Gastrocnemius medialis (tissue), 4 donors: ENCODE measurements at regions of chr6 and their contacts with region 1.

Region 1: GRCh38 chr6:15715060-15715459 is 52.2 kb upstream of the DTNBP1 start:
- DNase-seq: peak; percentile 6 to 40
- ATAC-seq: peak; percentile 70 to 79
- H3K4me3 ChIP-seq: no peak overlapping the region
- H3K27ac ChIP-seq: peak overlapping the region; percentile 44 to 80 (median 64)
- H3K4me1 ChIP-seq: peaks cover 29 to 30% of the 10 kb centered on the region in 2 donors
- H3K27me3 ChIP-seq: no peaks in the 10 kb centered on the region
- CTCF ChIP-seq: no peak
- POLR2A ChIP-seq: no peak

Region 2: DNA sequence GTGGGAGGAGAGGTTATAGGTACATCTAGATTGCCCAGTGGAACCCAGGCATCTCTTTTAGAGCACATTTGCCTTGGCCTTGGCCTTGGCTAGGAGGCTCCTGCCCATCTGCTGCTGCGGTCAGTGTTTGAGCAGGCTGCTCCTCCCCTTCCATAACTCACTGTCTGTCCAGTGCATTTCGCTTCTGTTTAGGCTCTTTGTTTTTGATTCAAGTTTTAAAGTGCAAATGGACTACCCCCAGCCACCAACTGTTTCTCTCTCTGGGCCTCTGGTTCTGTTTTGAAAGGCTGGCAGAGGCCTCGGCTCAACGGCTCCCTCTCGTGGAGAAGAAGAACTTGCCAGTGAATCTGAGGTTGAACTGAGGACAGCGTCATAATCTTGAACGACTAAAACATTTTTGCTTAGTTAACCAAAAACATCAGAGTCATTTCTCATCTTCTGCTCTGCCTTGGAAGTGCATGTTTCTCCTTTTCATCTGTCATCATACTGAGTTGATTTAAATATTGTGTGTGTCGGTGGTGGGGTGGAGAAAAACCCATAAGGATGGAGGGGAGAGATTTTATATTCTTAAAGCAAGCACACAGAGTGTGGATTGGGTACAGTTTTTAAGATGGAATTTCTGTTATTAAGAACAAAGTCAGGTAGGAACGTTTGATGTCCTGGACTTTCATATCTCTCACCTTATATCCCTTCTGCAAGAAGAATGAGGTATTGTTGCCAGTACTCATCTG is 223.6 kb before region 1 on chr6:
- in situ Hi-C with region 1: no loop called
- intact Hi-C with region 1: no loop called
- DNase-seq: peak; percentile 59 to 77
- ATAC-seq: peak; percentile 42 to 56
- H3K4me3 ChIP-seq: no peak overlapping the region
- H3K27ac ChIP-seq: peak overlapping the region; percentile 55 to 73 (median 69)
- H3K4me1 ChIP-seq: peaks cover 38 to 45% of the 10 kb centered on the region in 2 donors
- H3K27me3 ChIP-seq: no peaks in the 10 kb centered on the region
- CTCF ChIP-seq: peak; percentile 86 to 94 (median 93)
- POLR2A ChIP-seq: no peak

Region 3: DNA sequence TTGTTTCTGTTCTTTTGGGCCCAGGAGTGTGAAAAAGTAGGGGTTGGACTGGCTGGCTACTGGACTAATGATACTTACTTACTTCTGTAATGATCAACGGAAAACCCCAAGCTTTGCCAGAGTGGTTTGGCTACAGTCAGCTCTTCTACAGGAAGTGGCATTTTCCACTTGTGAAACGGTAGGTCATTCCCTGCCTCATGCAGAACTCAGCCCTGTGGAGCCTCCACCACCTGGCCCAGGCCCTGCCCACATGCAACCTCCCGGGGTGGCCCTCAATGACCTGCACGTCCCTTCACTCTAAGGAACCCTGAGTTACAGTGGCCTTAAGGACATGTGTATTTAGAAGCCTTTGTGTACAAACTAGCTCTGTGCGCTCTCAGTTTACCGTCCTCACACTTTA is 192.6 kb before region 1 on chr6:
- in situ Hi-C with region 1: no loop called
- intact Hi-C with region 1: no loop called
- DNase-seq: no peak
- ATAC-seq: peak in 1 of 2 donors; percentile 5
- H3K4me3 ChIP-seq: no peak overlapping the region
- H3K27ac ChIP-seq: peak overlapping the region; percentile 52 to 81 (median 71)
- H3K4me1 ChIP-seq: peaks cover 10 to 37% of the 10 kb centered on the region in 2 donors
- H3K27me3 ChIP-seq: no peaks in the 10 kb centered on the region
- CTCF ChIP-seq: no peak
- POLR2A ChIP-seq: no peak

Region 4: GRCh38 chr6:15735567-15736265 is 20.7 kb after region 1 on chr6:
- in situ Hi-C with region 1: no loop called
- intact Hi-C with region 1: no loop called
- DNase-seq: no peak
- ATAC-seq: no peak
- H3K4me3 ChIP-seq: no peak overlapping the region
- H3K27ac ChIP-seq: peak overlapping the region in 1 of 4 donors; percentile 12
- H3K4me1 ChIP-seq: peaks cover 0 to 11% of the 10 kb centered on the region in 2 donors
- H3K27me3 ChIP-seq: no peaks in the 10 kb centered on the region
- CTCF ChIP-seq: no peak
- POLR2A ChIP-seq: no peak

Region 5: DNA sequence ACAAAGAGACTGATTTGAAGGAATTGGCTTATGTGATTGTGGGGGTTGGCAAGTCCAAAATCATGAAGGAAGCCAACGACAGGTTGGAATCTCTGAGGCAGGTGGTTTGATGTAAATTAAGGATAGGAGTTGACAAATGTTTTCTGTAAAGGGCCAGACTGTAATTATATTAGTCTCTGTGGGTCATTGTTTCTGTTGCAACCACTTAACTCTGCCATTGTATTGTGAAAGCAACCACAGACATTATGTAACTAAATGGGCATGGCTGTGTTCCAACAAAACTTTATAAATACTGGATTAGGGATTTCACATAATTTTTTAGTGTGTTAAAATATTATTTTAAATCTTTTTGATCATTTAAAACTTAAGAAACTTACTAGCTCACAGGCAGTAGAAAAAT is 214.6 kb after region 1 on chr6:
- in situ Hi-C with region 1: no loop called
- intact Hi-C with region 1: loop called (anchors 5 kb)
- DNase-seq: no peak
- ATAC-seq: no peak
- H3K4me3 ChIP-seq: no peak overlapping the region
- H3K27ac ChIP-seq: peak overlapping the region in 1 of 4 donors; percentile 60
- H3K4me1 ChIP-seq: peaks cover 12 to 31% of the 10 kb centered on the region in 2 donors
- H3K27me3 ChIP-seq: no peaks in the 10 kb centered on the region
- CTCF ChIP-seq: no peak
- POLR2A ChIP-seq: no peak